Activated CD4-positive, alpha-beta T cell treated with anti-CD3 and anti-CD28 coated beads, Interleukin-2, amount 10 ng/mL, durations not matched to agents 7 days and 5 days (primary cell): ENCODE measurements at regions of chr13 and their contacts with region 1.

Region 1: DNA sequence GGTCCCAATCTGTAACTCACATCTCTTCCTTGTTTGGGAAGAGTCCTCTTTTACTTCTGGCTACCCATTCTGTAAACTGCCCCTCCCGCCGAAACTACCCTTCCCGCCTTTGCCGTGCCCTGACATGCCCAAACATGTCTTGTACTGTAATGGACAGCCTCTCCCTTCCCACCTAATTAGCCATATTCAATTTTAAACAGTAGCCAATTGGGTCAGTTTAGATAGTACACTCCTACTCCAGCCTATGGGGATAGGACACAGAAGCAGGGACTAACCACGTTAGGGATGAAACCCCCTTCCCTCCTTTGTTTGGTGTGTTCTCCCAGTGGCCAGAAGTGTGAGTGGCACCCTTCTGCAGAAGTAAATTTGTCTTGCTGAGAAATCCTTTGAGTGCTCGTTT is 34.2 kb downstream of the SACS start:
- DNase-seq: no peak
- H3K4me3 Mint-ChIP-seq: no peak overlapping the region
- H3K27ac Mint-ChIP-seq: no peak overlapping the region
- H3K4me1 Mint-ChIP-seq: no peaks in the 10 kb centered on the region
- H3K27me3 Mint-ChIP-seq: peaks cover 12% of the 10 kb centered on the region

Region 2: GRCh38 chr13:23180711-23181110 is 218.6 kb before region 1 on chr13 and contains the start of gene SGCG:
- CTCF ChIA-PET with region 1: no interaction called
- POLR2A ChIA-PET with region 1: interaction called, 12 read pairs
- DNase-seq: no peak
- H3K4me3 Mint-ChIP-seq: no peak within 1 kb of the TSS
- H3K27ac Mint-ChIP-seq: no peak within 1 kb of the TSS
- H3K4me1 Mint-ChIP-seq: no peaks in the 10 kb centered on the region
- H3K27me3 Mint-ChIP-seq: peaks cover 3% of the 10 kb centered on the region
- total RNA-seq, gene SGCG: not detected

Region 3: GRCh38 chr13:23609414-23609760 is 210.0 kb after region 1 on chr13:
- CTCF ChIA-PET with region 1: no interaction called
- POLR2A ChIA-PET with region 1: no interaction called
- DNase-seq: no peak
- H3K4me3 Mint-ChIP-seq: peak overlapping the region; percentile 28
- H3K27ac Mint-ChIP-seq: peak overlapping the region; percentile 2
- H3K4me1 Mint-ChIP-seq: peaks cover 16% of the 10 kb centered on the region
- H3K27me3 Mint-ChIP-seq: peaks cover 41% of the 10 kb centered on the region